ENCODE measurements at regions of chr1 and their contacts with region 1.

Region 1: DNA sequence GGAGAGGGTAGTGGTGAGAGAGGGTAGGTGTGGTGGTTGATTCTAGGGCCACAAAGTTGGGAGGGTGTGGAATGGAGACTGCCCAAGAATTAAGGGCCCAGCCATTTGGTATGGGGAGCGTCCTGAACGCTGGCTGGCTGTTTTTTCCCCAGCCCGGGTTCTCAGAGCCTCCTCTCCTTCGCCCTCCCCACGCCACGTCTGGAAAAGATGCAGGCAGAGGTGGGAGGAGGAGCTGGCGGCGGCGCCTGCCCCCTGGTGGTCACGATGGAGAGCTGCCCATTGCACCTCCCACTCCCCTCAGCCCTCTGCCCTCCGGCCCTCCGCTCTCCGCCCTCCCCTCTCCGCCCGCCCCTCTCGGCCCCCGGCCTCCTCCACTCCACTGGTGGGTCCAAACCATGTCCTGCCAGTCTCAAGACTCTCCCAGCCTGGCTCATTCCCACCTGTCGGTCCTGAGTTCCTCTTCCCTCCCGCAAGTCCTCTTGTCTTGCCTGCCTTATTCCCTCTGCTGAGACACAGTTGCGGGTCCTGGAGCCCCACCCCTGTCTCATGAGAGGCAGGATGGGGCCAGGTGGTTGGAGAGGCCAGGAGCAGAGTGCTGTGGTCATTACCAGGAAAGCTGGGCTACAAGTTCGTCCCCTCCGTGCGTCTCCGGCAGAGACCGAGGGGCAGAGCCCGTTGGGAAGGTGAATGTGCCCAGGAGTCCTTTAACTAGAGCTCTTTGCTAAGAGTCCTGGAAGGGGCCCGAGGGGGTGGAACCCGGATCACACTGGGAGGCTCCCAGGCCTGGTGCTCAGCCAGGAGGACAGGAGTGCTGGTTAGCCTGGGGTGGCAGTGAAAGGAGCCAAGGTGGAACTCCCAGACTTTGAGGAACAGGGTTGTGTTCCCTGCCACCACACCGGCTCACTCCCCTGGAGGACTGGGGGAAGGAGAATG is 22.6 kb downstream of the ETNK2 start:
- DNase-seq: peak; percentile 55 to 66
- ATAC-seq: peak; percentile 87

Region 2: DNA sequence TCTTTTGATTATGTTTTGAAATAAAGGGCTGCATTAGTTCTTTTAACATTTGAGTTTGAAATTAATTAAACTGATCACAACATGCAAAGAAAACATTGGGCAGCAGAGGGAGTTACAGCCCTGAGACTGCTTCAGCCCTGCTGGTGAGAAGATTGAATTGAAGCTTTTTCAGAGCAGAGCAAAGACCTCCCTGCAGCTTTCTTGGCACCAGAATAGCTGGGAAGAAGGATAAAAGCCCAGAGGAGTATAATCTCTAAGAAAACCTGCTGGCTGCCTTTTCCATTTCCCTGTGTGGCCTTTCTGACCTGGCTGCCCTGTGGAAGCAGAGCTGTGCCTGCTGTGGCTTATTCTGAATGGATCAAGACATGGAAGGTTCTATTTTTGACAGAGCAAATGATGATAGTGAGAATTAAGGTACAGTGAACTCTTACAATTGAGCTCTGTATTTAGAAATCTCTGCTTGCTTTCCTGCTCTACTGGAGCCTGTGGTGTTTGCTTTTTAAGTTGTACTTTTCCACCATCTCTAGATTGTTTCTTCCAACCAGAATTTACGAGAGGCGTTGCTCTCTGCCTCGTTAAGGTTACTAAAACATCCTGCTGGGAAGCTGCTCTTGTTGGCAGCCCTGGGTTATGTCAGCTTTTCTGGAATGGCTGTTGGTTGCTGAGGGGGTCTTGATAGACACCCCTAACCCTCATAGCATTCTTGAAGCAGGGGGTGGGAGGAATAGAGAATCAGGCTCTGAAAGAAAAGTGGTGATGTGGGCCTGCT is 257.9 kb before region 1 on chr1:
- intact Hi-C with region 1: loop called (anchors 2 to 5 kb)
- DNase-seq: no peak
- ATAC-seq: peak; percentile 89

Region 3: GRCh38 chr1:203911806-203912205 is 217.4 kb before region 1 on chr1:
- intact Hi-C with region 1: no loop called
- DNase-seq: no peak
- ATAC-seq: no peak

Region 4: DNA sequence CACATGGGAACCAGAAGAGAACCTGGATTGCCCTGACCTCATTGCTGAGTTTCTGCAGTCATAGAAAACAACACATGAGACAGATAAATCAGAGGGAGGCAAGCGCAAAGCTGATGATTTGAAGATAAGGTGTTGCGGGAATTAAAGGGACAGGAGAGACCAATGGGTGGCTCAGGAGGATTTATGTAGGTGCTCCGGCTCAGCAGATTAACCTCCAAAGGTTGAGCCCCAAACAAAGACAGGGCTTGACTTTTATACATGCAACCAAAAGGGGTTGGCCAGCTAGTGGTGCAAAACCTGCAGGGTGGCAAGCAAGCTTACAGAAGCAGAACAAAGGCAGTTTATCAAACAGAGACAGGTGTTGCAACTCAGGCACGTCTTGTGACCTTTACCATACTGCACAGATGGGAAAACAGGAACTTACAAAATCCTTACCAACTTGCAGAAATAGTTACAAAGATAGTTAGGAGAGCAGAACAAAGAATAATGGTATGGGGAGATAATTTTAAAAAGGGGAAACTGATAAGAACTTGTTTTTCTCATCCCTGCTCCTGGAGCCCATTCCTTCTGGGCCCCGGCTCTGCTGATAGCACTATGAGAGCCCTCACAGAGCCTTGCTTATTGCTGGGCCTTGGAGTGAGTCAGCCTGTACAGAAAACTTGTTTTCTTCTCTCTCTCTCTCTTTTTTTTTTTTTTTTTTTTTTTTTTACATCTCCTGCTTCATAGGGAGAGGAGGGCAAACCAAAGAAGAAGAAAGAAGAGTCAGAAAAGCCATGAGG is 174.3 kb before region 1 on chr1:
- intact Hi-C with region 1: no loop called
- DNase-seq: no peak
- ATAC-seq: no peak

Region 5: GRCh38 chr1:204041232-204041767 is 87.9 kb before region 1 on chr1:
- intact Hi-C with region 1: loop called in 1 of 2 experiments (anchors 10 kb)
- DNase-seq: no peak
- ATAC-seq: no peak

Region 6: GRCh38 chr1:204072931-204073836 is 56.0 kb before region 1 on chr1 and contains the start of gene SOX13:
- intact Hi-C with region 1: loop called in 1 of 2 experiments (anchors 5 kb)
- DNase-seq: peak; percentile 85 to 92
- ATAC-seq: peak; percentile 71
- total RNA-seq, gene SOX13: 36.2 to 38.4 TPM

Measured in left colon (tissue), 2 donors.